Activated T-helper 2 cell treated with anti-CD3 and anti-CD28 coated beads, Interferon-gamma antibody, Interleukin-2, Interleukin-4, amounts not matched to agents 10 μg/mL and 5 μg/mL and 100 μg/mL, durations not matched to agents 14 hours and 24 hours and 36 hours (primary cell): ENCODE measurements at regions of chr6 and their contacts with region 1.

Region 1: DNA sequence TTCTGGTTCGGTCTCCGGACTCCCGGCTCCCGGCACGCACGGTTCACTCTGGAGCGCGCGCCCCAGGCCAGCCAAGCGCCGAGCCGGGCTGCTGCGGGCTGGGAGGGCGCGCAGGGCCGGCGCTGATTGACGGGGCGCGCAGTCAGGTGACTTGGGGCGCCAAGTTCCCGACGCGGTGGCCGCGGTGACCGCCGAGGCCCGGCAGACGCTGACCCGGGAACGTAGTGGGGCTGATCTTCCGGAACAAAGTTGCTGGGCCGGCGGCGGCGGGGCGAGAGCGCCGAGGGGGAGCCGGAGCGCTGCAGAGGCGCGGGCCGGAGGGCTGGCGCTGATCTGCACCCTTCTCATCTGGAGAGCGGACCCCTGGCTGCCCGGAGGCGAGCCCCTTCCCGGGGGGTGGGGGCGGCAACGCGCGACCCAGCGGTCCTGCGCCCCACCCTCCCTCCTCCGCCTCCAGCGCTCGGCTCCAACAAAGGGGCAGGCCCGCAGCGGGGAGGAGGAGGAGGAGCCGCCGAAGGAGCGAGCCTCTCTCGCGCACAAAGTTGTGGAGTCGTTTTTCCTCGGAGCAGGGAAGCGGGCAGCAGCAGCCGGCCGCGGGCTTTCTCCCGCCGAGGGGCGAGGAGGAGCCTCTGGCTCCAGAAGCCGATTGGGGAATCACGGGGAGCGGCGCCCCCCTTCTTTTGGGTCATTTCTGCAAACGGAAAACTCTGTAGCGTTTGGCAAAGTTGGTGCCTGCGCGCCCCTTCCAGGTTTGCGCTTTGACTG is at the start of gene UTRN:
- DNase-seq: peak; percentile 41
- H3K4me3 Mint-ChIP-seq: peak within 1 kb of the TSS; percentile 91
- H3K27ac Mint-ChIP-seq: peak within 1 kb of the TSS; percentile 78
- H3K4me1 Mint-ChIP-seq: peaks cover 11% of the 10 kb centered on the region
- H3K27me3 Mint-ChIP-seq: peaks cover 21% of the 10 kb centered on the region
- total RNA-seq, gene UTRN: 48.6 and 54.6 TPM in 2 replicates

Region 2: GRCh38 chr6:144248476-144249301 is 36.3 kb before region 1 on chr6:
- intact Hi-C with region 1: loop called (anchors 5 kb)
- DNase-seq: no peak
- H3K4me3 Mint-ChIP-seq: no peak overlapping the region
- H3K27ac Mint-ChIP-seq: peak overlapping the region; percentile 9
- H3K4me1 Mint-ChIP-seq: peaks cover 19% of the 10 kb centered on the region
- H3K27me3 Mint-ChIP-seq: peaks cover 12% of the 10 kb centered on the region

Region 3: GRCh38 chr6:144343701-144344428 is 58.9 kb after region 1 on chr6:
- intact Hi-C with region 1: loop called (anchors 2 kb)
- DNase-seq: peak; percentile 44
- H3K4me3 Mint-ChIP-seq: peak overlapping the region; percentile 93
- H3K27ac Mint-ChIP-seq: peak overlapping the region; percentile 99
- H3K4me1 Mint-ChIP-seq: peaks cover 67% of the 10 kb centered on the region
- H3K27me3 Mint-ChIP-seq: no peaks in the 10 kb centered on the region

Region 4: DNA sequence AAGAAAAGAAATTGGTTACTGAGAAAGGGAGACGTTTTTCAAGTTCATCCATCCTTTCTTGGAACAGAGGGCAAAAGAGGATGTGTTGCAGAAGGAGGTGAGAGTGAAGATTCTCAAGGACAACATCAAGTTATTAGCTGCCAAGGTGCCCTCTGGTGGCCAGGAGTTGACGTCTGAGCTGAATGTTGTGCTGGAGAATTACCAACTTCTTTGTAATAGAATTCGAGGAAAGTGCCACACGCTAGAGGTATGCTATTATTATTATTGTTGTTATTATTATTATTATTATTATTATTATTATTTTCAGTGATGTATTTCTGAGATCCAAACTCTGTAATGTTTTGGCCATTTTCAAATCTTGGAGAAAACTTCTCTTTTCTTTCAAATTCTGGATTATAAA is 197.2 kb after region 1 on chr6:
- intact Hi-C with region 1: loop called (anchors 2 kb)
- DNase-seq: peak; percentile 49
- H3K4me3 Mint-ChIP-seq: no peak overlapping the region
- H3K27ac Mint-ChIP-seq: no peak overlapping the region
- H3K4me1 Mint-ChIP-seq: peaks cover 10% of the 10 kb centered on the region
- H3K27me3 Mint-ChIP-seq: no peaks in the 10 kb centered on the region